Natural killer cell (primary cell): ENCODE measurements at regions of chr2 and their contacts with region 1.

Region 1: GRCh38 chr2:181305301-181306123 is 151.7 kb upstream of the ITGA4 start:
- DNase-seq: peak in 1 of 2 donors; percentile 69
- ATAC-seq: peak; percentile 56 to 78 (median 69)
- H3K4me3 ChIP-seq: no peak overlapping the region
- H3K4me3 Mint-ChIP-seq: peak overlapping the region; percentile 82
- H3K27ac ChIP-seq: peak overlapping the region; percentile 85
- H3K27ac Mint-ChIP-seq: peak overlapping the region; percentile 94 to 97
- H3K4me1 ChIP-seq: peaks cover 26% of the 10 kb centered on the region
- H3K4me1 Mint-ChIP-seq: peaks cover 71 to 72% of the 10 kb centered on the region in 2 donors
- H3K27me3 ChIP-seq: no peaks in the 10 kb centered on the region
- H3K27me3 Mint-ChIP-seq: no peaks in the 10 kb centered on the region
- CTCF ChIP-seq: no peak

Region 2: DNA sequence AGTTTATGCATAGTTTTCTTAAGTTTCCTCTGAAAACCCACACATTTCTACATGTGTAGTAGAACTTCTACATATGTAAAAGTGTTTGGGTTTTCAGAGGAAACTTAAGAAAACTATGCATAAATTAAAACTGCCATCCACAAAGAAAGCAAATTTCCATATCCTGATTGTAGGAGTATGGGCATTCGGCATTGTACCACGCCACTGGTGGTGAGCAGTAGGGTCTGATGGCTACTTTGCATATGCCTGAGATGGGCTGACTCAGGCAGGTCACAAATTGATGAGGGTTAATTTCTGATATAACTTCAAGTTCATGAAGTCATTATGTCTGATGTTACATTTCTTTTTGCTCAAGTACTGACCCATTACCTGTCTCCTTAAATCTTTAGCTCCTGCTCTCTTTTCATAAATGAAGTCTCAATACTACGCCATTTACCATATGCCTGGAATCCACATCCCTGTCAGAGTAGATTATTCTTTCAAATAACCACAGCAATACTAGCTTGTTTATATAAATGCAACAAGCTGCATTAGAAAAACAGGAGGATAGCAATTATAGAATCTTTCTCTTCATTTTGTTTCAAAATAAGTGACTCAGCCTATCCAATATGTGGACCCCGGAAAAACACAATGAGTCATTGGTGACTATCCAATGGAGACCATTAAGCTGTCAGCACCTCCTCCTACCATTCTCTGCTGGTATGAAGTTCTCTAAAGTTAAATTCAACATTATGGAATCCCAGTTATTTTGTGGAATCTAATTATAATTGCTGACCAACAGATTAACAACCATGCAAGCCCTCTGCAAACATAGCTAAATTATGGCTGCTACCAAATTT is 680.3 kb before region 1 on chr2:
- intact Hi-C with region 1: no loop called
- DNase-seq: no peak
- ATAC-seq: no peak
- H3K4me3 ChIP-seq: no peak overlapping the region
- H3K4me3 Mint-ChIP-seq: no peak overlapping the region
- H3K27ac ChIP-seq: no peak overlapping the region
- H3K27ac Mint-ChIP-seq: no peak overlapping the region
- H3K4me1 ChIP-seq: no peaks in the 10 kb centered on the region
- H3K4me1 Mint-ChIP-seq: no peaks in the 10 kb centered on the region
- H3K27me3 ChIP-seq: no peaks in the 10 kb centered on the region
- H3K27me3 Mint-ChIP-seq: peaks cover 0 to 3% of the 10 kb centered on the region in 2 donors
- CTCF ChIP-seq: no peak

Region 3: DNA sequence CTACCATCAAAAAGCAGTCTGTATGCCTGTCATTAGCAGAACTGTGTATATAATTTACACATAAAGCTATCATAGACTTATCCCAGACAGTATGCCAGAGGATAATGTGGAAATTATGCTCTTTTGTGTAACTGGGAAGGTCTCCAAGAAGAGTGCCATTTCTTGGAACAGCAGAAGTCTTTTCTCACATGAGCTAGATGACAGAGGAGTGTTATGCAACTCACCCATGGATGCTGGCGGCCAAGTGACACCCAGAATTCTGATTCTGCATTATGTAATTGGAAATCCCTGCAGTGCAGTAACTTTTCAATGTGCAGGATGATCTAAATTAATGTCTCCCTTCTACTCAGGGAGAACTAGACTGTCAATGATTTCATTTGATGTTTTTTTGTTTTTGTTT is 165.1 kb before region 1 on chr2:
- intact Hi-C with region 1: loop called (anchors 5 kb)
- DNase-seq: peak in 1 of 2 donors; percentile 69
- ATAC-seq: peak; percentile 45 to 58 (median 54)
- H3K4me3 ChIP-seq: no peak overlapping the region
- H3K4me3 Mint-ChIP-seq: peak overlapping the region; percentile 28
- H3K27ac ChIP-seq: no peak overlapping the region
- H3K27ac Mint-ChIP-seq: peak overlapping the region; percentile 91 to 92
- H3K4me1 ChIP-seq: peaks cover 24% of the 10 kb centered on the region
- H3K4me1 Mint-ChIP-seq: peaks cover 72 to 73% of the 10 kb centered on the region in 2 donors
- H3K27me3 ChIP-seq: no peaks in the 10 kb centered on the region
- H3K27me3 Mint-ChIP-seq: no peaks in the 10 kb centered on the region
- CTCF ChIP-seq: no peak

Region 4: DNA sequence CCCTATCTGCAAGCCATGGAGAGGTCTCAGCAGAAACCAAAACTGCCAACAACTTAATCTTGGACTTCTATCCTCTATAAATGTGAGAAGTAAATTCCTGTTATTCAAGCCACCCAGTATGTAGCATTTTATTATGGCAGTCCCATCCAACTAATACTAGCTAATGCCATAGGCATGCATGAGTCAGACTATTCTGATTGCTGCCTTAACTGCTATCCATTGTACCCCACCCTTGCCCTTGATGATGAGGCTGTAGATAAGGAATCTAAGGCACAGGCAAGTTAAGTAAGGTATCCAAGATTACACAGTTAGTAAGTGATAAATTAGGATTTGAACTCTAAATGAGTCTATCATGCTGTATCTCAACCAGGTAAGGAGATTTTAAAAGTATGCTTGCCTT is 102.1 kb before region 1 on chr2:
- intact Hi-C with region 1: no loop called
- DNase-seq: no peak
- ATAC-seq: no peak
- H3K4me3 ChIP-seq: no peak overlapping the region
- H3K4me3 Mint-ChIP-seq: no peak overlapping the region
- H3K27ac ChIP-seq: no peak overlapping the region
- H3K27ac Mint-ChIP-seq: no peak overlapping the region
- H3K4me1 ChIP-seq: no peaks in the 10 kb centered on the region
- H3K4me1 Mint-ChIP-seq: peaks cover 36 to 41% of the 10 kb centered on the region in 2 donors
- H3K27me3 ChIP-seq: no peaks in the 10 kb centered on the region
- H3K27me3 Mint-ChIP-seq: no peaks in the 10 kb centered on the region
- CTCF ChIP-seq: no peak

Region 5: GRCh38 chr2:181393472-181393871 is 88.0 kb after region 1 on chr2:
- intact Hi-C with region 1: loop called (anchors 5 kb)
- DNase-seq: peak in 1 of 2 donors; percentile 66
- ATAC-seq: peak; percentile 57 to 79 (median 65)
- H3K4me3 ChIP-seq: peak overlapping the region; percentile 53
- H3K4me3 Mint-ChIP-seq: peak overlapping the region; percentile 95
- H3K27ac ChIP-seq: peak overlapping the region; percentile 99
- H3K27ac Mint-ChIP-seq: peak overlapping the region; percentile 92 to 98
- H3K4me1 ChIP-seq: peaks cover 8% of the 10 kb centered on the region
- H3K4me1 Mint-ChIP-seq: peaks cover 21 to 27% of the 10 kb centered on the region in 2 donors
- H3K27me3 ChIP-seq: no peaks in the 10 kb centered on the region
- H3K27me3 Mint-ChIP-seq: no peaks in the 10 kb centered on the region
- CTCF ChIP-seq: no peak